ENCODE measurements at regions of chr7 and their contacts with region 1.

Region 1: GRCh38 chr7:3575753-3576531 is 274.9 kb downstream of the SDK1 start:
- DNase-seq: no peak
- ATAC-seq: no peak
- H3K4me3 ChIP-seq: no peak overlapping the region
- H3K27ac ChIP-seq: no peak overlapping the region
- H3K4me1 ChIP-seq: no peaks in the 10 kb centered on the region
- H3K27me3 ChIP-seq: no peaks in the 10 kb centered on the region
- CTCF ChIP-seq: no peak
- POLR2A ChIP-seq: no peak

Region 2: DNA sequence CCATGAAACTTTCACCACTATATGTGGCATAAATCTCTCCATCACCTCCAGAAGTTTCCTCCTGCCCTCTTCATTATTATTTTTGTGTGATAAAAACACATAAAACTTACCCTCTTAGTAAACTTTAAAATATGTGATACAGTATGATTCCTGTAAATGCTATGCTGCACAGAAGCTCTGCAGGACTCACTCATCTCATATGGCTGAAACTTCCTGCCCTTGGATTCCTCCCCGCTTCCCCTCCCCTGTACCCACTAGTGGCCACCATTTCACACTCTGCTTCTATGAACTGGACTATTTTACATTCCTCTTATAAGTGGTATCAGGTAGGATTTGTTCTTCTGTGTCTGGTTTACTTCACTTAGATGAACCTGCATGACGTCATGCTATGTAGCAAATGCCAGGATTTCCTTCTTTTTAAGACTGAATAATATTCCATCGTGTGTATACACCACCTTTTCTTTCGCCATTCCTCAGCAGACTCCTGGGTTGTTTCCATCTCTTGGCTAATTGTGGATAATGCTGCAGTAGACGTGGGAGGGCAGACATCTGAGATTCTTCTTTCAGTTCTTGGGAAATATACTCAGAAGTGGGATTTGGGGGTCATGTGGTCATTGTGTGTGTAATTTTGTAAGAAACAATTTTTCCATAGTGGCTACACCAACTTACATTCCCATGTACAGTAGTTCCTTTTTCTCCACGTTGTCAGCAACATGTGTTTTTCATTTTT is 60.4 kb after region 1 on chr7:
- intact Hi-C with region 1: loop called in 1 of 10 experiments (anchors 10 kb)
- DNase-seq: no peak
- ATAC-seq: no peak
- H3K4me3 ChIP-seq: no peak overlapping the region
- H3K27ac ChIP-seq: no peak overlapping the region
- H3K4me1 ChIP-seq: no peaks in the 10 kb centered on the region
- H3K27me3 ChIP-seq: no peaks in the 10 kb centered on the region
- CTCF ChIP-seq: no peak
- POLR2A ChIP-seq: no peak

Region 3: GRCh38 chr7:3754488-3755341 is 178.8 kb after region 1 on chr7:
- intact Hi-C with region 1: no loop called
- DNase-seq: peak in 1 of 5 donors; percentile 27
- ATAC-seq: peak in 2 of 4 donors; percentile 50 to 55
- H3K4me3 ChIP-seq: no peak overlapping the region
- H3K27ac ChIP-seq: peak overlapping the region in 2 of 12 donors; percentile 37 to 38
- H3K4me1 ChIP-seq: no peaks in the 10 kb centered on the region
- H3K27me3 ChIP-seq: no peaks in the 10 kb centered on the region
- CTCF ChIP-seq: no peak
- POLR2A ChIP-seq: no peak